ENCODE measurements at regions of chr11 and their contacts with region 1.

Region 1: GRCh38 chr11:57249384-57250319 is 12.6 kb upstream of the APLNR start:
- H3K4me3 ChIP-seq: no peak overlapping the region
- H3K27ac ChIP-seq: no peak overlapping the region
- H3K4me1 ChIP-seq: no peaks in the 10 kb centered on the region
- CTCF ChIP-seq: peak; percentile 37; the same call in 1 of the 2 replicates

Region 2: GRCh38 chr11:56841210-56841810 is 408.3 kb before region 1 on chr11:
- CTCF ChIA-PET with region 1: interaction called, 131 read pairs
- POLR2A ChIA-PET with region 1: no interaction called
- H3K4me3 ChIP-seq: no peak overlapping the region
- H3K27ac ChIP-seq: no peak overlapping the region
- H3K4me1 ChIP-seq: no peaks in the 10 kb centered on the region
- CTCF ChIP-seq: no peak

Region 3: DNA sequence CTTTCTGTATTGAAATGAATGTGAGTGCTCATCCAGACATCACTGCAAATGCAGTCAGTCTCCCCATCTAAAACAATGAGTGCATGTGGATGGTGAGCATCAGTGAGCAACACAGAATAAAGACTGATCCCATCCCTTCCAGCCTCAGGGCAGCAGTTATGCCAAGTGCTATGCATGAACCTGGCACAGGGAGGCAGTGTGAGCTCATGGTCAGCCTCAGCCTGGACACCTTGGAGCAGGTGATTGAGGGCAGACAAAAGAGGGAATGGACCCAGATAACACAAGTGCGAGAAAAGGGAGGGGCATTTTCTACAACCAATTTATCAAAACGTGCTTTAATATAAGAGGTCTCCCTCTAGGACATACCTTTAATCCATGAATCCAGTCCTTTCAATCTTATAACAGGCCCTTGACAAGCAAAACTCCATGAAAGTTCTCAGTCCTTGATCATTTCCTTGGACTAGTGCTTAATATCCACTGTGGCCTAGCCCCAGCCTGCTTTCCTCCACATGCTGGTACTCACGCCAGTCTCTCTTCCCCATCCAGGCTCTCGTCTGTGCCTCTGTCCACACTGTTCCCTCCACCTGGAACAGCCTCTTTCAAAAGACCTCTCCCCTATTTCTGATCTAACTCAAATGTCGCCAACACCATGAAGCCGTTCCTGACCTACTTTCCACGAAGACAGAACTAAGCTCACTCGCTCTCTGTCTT is 118.4 kb before region 1 on chr11:
- CTCF ChIA-PET with region 1: interaction called, 244 read pairs
- POLR2A ChIA-PET with region 1: no interaction called
- H3K4me3 ChIP-seq: no peak overlapping the region
- H3K27ac ChIP-seq: no peak overlapping the region
- H3K4me1 ChIP-seq: no peaks in the 10 kb centered on the region
- CTCF ChIP-seq: no peak

Region 4: DNA sequence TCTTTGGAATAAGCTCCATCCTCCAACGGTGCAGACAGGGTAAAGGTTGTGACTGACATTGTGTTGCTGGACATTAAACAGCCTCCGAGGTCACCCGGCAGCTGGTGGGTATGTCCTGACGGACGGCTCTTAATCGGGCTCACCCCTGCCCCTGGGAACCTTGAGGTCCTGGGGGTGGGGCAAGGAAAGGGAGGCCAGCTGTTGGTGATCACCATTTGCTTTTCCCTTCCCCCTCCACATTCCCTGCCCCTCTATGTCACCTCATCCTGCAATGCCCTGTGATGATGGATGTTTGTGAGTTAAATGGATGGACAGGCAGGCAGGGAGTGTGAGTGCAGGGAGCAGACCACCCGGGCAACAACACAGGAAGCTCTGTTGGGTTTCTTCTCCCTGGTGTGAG is 38.9 kb before region 1 on chr11:
- CTCF ChIA-PET with region 1: interaction called, 13 read pairs
- POLR2A ChIA-PET with region 1: no interaction called
- H3K4me3 ChIP-seq: no peak overlapping the region
- H3K27ac ChIP-seq: no peak overlapping the region
- H3K4me1 ChIP-seq: no peaks in the 10 kb centered on the region
- CTCF ChIP-seq: no peak

Region 5: DNA sequence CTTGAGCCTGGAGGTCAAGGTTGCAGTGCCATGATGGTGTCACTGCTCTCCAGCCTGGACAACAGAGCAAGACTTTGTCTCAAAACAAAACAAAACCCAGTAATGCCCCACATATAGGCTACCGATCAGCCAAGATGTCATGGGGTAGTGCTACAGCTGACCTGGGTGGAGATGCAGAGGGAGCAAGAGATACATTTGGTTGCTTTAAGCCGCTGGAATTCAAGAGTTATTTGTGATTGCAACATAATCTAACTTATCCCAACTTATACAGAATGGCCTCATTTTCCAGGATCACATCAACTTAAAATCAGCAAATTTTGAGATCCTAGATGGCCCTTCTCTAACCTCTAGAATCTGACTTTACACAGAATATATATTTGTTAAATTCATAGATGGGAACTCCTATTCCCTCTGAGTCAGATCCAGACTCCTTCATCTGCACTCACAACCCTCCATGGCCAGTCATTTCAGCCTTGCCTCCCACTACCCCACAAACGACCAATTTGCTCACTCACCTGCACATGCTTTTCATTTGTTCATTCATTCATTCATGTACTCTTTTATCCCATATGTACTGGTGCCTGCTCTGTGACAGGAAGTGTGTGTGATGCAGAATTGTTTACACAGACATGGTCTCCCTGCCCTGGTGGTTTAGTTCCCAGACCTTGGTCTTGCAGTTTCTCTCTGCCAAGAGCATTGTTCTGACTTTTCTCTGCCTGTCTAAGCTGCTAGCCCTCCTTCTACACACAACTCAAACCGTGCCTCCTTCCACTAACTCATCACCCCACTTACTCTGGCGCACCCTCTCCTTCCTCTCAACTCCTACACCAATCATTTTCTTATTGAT is 11.5 kb after region 1 on chr11:
- CTCF ChIA-PET with region 1: interaction called, 13 read pairs
- POLR2A ChIA-PET with region 1: no interaction called
- H3K4me3 ChIP-seq: no peak overlapping the region
- H3K27ac ChIP-seq: no peak overlapping the region
- H3K4me1 ChIP-seq: no peaks in the 10 kb centered on the region
- CTCF ChIP-seq: no peak

Region 6: GRCh38 chr11:57277845-57278709 is 28.4 kb after region 1 on chr11:
- CTCF ChIA-PET with region 1: interaction called, 68 read pairs
- POLR2A ChIA-PET with region 1: no interaction called
- H3K4me3 ChIP-seq: no peak overlapping the region
- H3K27ac ChIP-seq: no peak overlapping the region
- H3K4me1 ChIP-seq: no peaks in the 10 kb centered on the region
- CTCF ChIP-seq: peak; percentile 48